Body of pancreas (tissue), 4 donors: ENCODE measurements at regions of chr3 and their contacts with region 1.

Region 1: GRCh38 chr3:154252759-154253638 is 71.3 kb downstream of the DHX36 start:
- DNase-seq: peak; percentile 90 to 95 (median 92)
- ATAC-seq: peak; percentile 95
- H3K4me3 ChIP-seq: no peak overlapping the region
- H3K27ac ChIP-seq: no peak overlapping the region
- H3K4me1 ChIP-seq: peaks cover 5% of the 10 kb centered on the region
- H3K27me3 ChIP-seq: no peaks in the 10 kb centered on the region
- CTCF ChIP-seq: peak; percentile 69 to 97 (median 93)
- POLR2A ChIP-seq: no peak

Region 2: GRCh38 chr3:154095832-154096421 is 157.1 kb before region 1 on chr3:
- intact Hi-C with region 1: loop called (anchors 5 kb)
- DNase-seq: no peak
- ATAC-seq: no peak
- H3K4me3 ChIP-seq: no peak overlapping the region
- H3K27ac ChIP-seq: no peak overlapping the region
- H3K4me1 ChIP-seq: no peaks in the 10 kb centered on the region
- H3K27me3 ChIP-seq: no peaks in the 10 kb centered on the region
- CTCF ChIP-seq: peak; percentile 18 to 58 (median 50)
- POLR2A ChIP-seq: no peak

Region 3: DNA sequence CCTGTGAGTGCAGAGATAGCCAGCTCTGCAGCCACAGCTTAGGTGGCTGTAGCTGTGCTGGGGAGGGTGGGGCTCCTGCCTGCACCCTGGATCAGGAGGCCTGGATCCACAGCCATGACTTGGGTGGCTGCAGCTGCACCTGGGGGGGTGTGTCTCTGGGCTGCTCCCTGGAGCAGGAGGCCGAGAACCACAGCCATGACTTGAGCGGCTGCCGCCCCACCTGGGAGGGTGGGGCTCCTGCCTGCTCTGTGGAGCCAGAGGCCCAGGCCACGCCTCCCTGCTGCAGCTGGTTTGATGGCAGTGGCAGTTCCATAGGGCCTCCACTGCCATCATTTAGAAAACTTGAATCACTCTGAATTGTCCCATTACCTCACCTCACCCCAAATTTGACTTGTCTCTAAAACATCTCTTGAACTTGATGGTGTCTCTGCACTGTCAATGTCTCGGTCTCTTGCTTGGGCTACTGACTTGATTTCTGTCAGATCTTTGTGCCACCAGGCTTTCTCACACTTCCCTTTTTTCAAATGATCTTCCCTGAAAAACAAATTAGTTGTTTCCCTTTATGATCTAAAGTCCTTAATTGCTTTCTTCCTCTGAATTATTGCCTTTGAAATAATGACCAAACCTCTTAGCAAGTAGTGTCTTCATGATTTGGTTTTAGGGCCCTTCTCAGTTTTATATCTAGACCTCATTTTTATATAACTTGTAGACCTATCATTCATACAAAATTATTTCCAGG is 513.9 kb after region 1 on chr3:
- intact Hi-C with region 1: no loop called
- DNase-seq: no peak
- ATAC-seq: no peak
- H3K4me3 ChIP-seq: no peak overlapping the region
- H3K27ac ChIP-seq: no peak overlapping the region
- H3K4me1 ChIP-seq: no peaks in the 10 kb centered on the region
- H3K27me3 ChIP-seq: no peaks in the 10 kb centered on the region
- CTCF ChIP-seq: no peak
- POLR2A ChIP-seq: no peak